Common myeloid progenitor, CD34-positive (primary cell): ENCODE measurements at regions of chr6 and their contacts with region 1.

Region 1: GRCh38 chr6:34223956-34224940 is 12.4 kb upstream of the HMGA1 start:
- DNase-seq: peak; percentile 96 to 99 (median 99)
- H3K4me3 ChIP-seq: peak overlapping the region; percentile 31 to 79 (median 65)
- H3K27ac ChIP-seq: peak overlapping the region; percentile 95 to 98
- H3K4me1 ChIP-seq: peaks cover 3 to 45% (median 20%) of the 10 kb centered on the region in 4 experiments
- H3K27me3 ChIP-seq: no peaks in the 10 kb centered on the region

Region 2: GRCh38 chr6:34236131-34236996 is 12.1 kb after region 1 on chr6 and contains the start of gene HMGA1:
- CTCF ChIA-PET with region 1: interaction called, 7 read pairs
- POLR2A ChIA-PET with region 1: interaction called, 17 read pairs
- DNase-seq: peak; percentile 91 to 97 (median 95)
- H3K4me3 ChIP-seq: peak within 1 kb of the TSS; percentile 61 to 87 (median 79)
- H3K27ac ChIP-seq: peak within 1 kb of the TSS; percentile 58 to 87
- H3K4me1 ChIP-seq: peaks cover 2 to 42% (median 34%) of the 10 kb centered on the region in 4 experiments
- H3K27me3 ChIP-seq: no peaks in the 10 kb centered on the region

Region 3: GRCh38 chr6:34570066-34570833 is 346.0 kb after region 1 on chr6:
- CTCF ChIA-PET with region 1: no interaction called
- POLR2A ChIA-PET with region 1: no interaction called
- DNase-seq: no peak
- H3K4me3 ChIP-seq: no peak overlapping the region
- H3K27ac ChIP-seq: no peak overlapping the region
- H3K4me1 ChIP-seq: no peaks in the 10 kb centered on the region
- H3K27me3 ChIP-seq: no peaks in the 10 kb centered on the region

Region 4: GRCh38 chr6:34638834-34639736 is 414.8 kb after region 1 on chr6:
- CTCF ChIA-PET with region 1: no interaction called
- POLR2A ChIA-PET with region 1: no interaction called
- DNase-seq: no peak
- H3K4me3 ChIP-seq: no peak overlapping the region
- H3K27ac ChIP-seq: no peak overlapping the region
- H3K4me1 ChIP-seq: no peaks in the 10 kb centered on the region
- H3K27me3 ChIP-seq: no peaks in the 10 kb centered on the region